ENCODE measurements at regions of chr10 and their contacts with region 1.

Region 1: DNA sequence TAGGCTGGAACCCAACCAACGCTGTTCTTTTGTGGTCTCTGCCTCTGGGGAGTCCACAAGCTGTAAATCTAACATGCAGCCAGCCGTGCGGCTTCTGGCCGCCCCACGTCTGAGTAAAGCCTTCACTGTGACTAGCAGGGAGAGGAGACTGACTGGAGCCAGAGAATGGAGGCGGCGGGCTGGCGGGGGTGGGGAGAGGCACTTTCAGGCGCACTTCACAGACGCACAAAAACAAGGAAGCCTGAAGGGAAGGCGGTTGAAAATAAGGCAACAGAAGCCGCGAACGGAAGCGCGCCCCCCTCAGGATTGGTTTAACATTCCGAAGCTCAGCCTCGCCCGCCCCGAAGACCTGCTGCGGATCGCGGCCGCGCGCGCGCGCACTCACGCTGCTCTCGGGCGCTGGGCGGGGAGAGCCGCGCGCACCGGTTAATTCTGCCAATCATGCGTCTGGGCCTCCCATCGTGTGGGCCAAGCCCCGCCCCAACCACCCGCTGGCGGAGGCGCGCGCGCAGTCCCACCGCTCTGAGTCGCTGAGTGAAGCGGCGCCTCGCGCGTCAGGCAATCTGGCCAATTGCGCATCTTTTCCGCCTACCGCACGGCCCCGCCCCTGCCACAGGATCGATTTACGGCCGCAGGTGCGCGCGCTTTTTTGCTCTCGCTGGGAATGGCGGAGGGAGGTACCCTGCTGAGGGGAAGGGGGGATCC is at the start of gene SFR1:
- H3K4me3 Mint-ChIP-seq: peak within 1 kb of the TSS; percentile 88
- H3K27ac Mint-ChIP-seq: peak within 1 kb of the TSS; percentile 97
- H3K4me1 Mint-ChIP-seq: peaks cover 14% of the 10 kb centered on the region
- H3K27me3 Mint-ChIP-seq: no peaks in the 10 kb centered on the region

Region 2: DNA sequence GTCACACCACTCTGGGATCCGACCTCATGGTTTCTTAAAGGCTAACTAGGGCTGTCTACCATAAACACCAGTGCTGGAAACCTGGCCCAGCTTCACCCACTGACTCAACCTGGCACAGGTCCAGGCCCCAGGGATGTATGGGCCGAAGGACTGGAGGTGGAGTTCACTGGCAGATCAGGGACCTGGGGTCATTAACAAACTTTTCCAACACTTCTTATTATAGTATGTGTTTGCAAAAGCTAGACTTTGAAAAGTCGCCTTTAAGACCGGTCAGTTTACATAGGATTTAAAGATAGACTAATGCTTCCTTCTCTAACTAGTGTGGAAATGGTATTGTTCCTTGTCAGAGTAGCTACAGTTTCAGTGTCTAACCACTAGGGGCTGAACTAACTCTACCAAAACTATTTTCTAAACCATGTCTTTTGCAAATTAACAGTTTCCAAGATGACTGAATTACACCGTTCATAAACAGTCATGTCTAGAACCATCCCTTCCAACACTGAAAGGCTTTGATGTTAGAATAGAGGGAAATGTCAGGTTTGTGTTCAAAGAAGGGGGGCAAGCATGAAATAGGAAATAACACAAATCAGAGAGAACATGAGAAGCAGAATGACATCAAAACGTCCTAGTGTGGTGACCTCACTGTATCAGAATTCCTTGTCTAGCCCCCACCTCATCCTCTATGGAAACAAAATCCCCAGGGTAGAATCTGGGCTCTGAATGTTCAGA is 233.4 kb before region 1 on chr10:
- intact Hi-C with region 1: loop called (anchors 10 kb)
- H3K4me3 Mint-ChIP-seq: no peak overlapping the region
- H3K27ac Mint-ChIP-seq: no peak overlapping the region
- H3K4me1 Mint-ChIP-seq: peaks cover 26% of the 10 kb centered on the region
- H3K27me3 Mint-ChIP-seq: no peaks in the 10 kb centered on the region

Region 3: DNA sequence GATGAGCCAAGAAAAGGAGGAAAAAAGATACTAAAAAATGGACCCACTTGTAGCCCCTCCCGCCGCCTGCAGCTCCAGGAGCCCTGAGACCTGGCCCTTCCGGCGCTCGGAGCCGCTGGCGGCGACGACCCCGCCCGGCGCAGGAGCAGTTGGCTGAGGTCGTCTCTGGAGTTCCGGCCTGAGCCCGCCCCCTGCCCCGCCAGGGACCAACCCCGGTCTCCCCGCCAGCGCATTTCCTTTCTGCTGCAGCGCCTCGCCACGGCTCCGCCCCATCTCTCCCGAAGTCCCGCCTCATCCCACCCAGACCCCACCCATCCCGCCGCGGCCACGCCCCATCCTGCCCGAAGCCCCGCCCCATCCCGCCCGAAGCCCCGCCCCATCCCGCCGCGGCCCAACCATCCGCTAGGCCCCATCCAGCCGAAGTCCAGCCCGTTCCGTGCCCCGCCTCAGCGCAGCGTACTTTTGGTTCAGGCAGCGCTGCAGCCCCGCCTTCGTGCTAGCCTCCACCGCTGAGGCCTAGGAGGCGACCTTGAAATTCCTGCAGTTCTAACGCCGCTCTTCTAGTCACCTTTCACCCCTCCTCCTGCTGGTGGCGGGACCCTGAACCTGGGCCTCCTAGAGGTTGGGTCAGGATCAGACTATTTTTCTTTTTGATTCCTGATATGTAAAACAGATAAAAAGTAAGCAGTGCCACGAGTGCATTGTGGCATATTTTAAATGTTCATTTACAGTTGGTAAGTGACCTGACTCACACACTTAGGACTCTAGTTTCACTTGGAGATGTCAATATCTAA is 203.4 kb before region 1 on chr10 and contains the start of gene STN1:
- intact Hi-C with region 1: loop called (anchors 2 kb)
- H3K4me3 Mint-ChIP-seq: peak within 1 kb of the TSS; percentile 90
- H3K27ac Mint-ChIP-seq: peak within 1 kb of the TSS; percentile 99
- H3K4me1 Mint-ChIP-seq: peaks cover 33% of the 10 kb centered on the region
- H3K27me3 Mint-ChIP-seq: no peaks in the 10 kb centered on the region

Region 4: DNA sequence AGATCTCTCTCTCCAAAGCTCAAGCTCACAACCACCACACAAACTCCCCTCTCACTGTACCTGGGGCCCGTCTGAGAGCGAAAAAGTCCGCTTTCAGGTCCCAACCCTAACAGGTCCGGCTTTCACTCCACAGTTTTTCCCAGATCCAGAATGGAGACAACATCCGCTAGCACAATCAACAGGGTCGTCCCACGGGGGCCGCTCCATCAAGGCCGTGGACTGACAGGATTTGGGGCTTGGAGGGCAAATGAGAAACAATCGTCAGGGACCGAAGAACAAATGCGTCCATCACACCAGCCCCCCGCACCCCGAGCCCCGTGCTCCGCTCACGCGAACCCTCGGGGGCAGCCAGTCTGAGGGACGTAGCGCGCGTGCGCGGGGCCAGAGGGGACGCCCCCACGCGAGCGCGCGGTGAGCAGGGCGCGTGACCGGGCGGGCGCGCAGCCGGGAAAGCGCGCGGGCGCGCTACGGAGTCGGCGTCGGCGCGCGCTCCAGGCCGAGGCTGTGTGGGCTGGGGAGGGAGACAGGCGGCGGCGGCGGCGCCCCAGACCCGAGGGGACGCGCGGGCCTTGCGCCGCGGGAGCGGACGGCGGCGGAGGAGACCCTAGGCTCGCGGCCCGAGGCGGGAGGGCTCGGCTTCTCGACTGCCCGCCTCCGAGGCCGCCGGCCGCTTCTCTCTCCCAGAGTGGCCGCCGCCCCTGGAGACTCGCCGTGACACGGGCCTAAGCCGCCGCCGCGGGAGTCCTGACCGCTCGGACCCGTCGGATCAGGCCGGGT is 154.8 kb before region 1 on chr10 and contains the start of gene SLK:
- intact Hi-C with region 1: loop called (anchors 2 kb)
- H3K4me3 Mint-ChIP-seq: peak within 1 kb of the TSS; percentile 97
- H3K27ac Mint-ChIP-seq: peak within 1 kb of the TSS; percentile 85
- H3K4me1 Mint-ChIP-seq: peaks cover 34% of the 10 kb centered on the region
- H3K27me3 Mint-ChIP-seq: no peaks in the 10 kb centered on the region

Region 5: GRCh38 chr10:103983367-103983911 is 138.2 kb before region 1 on chr10:
- intact Hi-C with region 1: no loop called
- H3K4me3 Mint-ChIP-seq: no peak overlapping the region
- H3K27ac Mint-ChIP-seq: no peak overlapping the region
- H3K4me1 Mint-ChIP-seq: peaks cover 53% of the 10 kb centered on the region
- H3K27me3 Mint-ChIP-seq: no peaks in the 10 kb centered on the region

Region 6: GRCh38 chr10:104028146-104028545 is 93.5 kb before region 1 on chr10:
- intact Hi-C with region 1: loop called (anchors 10 kb)
- H3K4me3 Mint-ChIP-seq: no peak overlapping the region
- H3K27ac Mint-ChIP-seq: no peak overlapping the region
- H3K4me1 Mint-ChIP-seq: no peaks in the 10 kb centered on the region
- H3K27me3 Mint-ChIP-seq: no peaks in the 10 kb centered on the region

Region 7: GRCh38 chr10:104268716-104269645 is 147.3 kb after region 1 on chr10 and contains the start of gene GSTO2:
- intact Hi-C with region 1: loop called (anchors 10 kb)
- H3K4me3 Mint-ChIP-seq: peak within 1 kb of the TSS; percentile 91
- H3K27ac Mint-ChIP-seq: peak within 1 kb of the TSS; percentile 92
- H3K4me1 Mint-ChIP-seq: peaks cover 8% of the 10 kb centered on the region
- H3K27me3 Mint-ChIP-seq: no peaks in the 10 kb centered on the region

Region 8: DNA sequence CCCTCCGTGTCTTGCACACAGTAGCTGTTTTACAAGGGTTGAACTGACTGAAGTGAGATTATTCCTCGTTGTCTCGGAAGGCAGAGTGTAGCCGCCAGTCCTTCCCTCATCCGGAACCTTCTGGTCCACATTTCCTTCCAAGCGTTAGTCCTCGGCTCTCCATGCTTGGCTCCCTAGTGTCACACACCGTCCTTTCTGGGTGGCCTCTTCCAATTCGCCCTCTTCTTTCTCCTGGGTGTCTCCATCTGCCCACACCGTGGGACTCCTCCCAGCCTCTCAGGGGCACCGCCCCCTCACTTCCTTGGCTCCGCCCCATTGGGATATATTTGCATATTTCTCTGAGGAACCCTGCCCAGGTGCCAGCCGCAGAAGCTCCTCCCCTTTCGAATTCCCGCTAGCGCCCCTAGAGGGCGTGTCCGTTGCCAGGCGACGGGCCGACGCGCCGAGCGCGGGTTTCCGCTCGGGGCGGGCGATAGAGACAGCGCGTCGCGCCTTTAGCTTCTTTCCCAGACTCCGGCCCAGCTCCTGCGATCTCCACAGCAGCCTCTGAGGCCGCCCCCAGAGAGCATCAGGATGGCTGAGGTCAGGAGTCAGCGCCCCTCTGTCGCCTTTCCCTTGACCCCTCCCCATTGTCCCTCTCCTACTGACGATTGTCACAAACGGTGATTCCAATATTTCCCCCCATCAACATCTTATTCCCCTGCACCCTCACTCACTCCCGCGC is 231.8 kb after region 1 on chr10 and contains the start of gene CFAP58:
- intact Hi-C with region 1: loop called (anchors 5 kb)
- H3K4me3 Mint-ChIP-seq: no peak within 1 kb of the TSS
- H3K27ac Mint-ChIP-seq: no peak within 1 kb of the TSS
- H3K4me1 Mint-ChIP-seq: peaks cover 2% of the 10 kb centered on the region
- H3K27me3 Mint-ChIP-seq: no peaks in the 10 kb centered on the region

Region 9: GRCh38 chr10:105827133-105827532 is 1705.5 kb after region 1 on chr10:
- intact Hi-C with region 1: no loop called
- H3K4me3 Mint-ChIP-seq: no peak overlapping the region
- H3K27ac Mint-ChIP-seq: no peak overlapping the region
- H3K4me1 Mint-ChIP-seq: no peaks in the 10 kb centered on the region
- H3K27me3 Mint-ChIP-seq: no peaks in the 10 kb centered on the region